Activated CD8-positive, alpha-beta T cell treated with anti-CD3 and anti-CD28 coated beads, Interleukin-2, amount 10 ng/mL, durations not matched to agents 7 days and 5 days (primary cell): ENCODE measurements at regions of chr18 and their contacts with region 1.

Region 1: DNA sequence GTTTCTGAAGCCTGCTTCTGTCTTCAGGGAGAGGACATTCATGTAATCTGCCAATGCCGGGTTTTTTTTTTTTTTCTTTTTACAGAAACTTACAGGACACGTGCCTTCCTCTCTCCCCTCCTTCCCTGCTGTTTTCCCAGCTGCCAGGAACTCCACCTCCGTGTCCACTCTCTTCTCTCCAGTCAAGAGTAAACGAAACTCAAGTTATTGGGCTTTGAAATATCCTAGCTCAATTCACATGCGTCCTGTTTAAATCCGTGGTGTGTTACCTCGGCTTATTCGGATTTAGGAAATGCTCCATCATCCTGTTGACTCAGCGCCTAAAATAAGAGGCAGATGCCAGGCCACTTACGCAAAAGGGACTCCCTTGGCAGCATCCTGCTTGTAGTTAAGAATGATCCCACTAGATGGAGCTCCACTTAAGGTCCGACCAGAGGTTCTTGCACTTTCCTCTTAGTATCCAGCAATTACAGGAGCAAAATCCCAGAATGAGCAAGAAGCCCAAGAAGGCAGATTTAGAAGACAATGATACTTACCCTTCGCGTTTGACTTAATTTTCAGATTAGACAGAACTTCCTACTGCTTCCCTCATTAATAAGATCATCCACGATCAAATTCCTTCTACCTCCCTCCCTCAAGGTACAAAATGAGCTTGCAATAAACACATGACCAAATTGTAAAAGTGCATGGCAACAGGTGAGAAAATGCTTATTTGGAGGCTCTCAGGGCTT is 97.2 kb upstream of the ZCCHC2 start:
- DNase-seq: peak; percentile 76
- ATAC-seq: peak; percentile 35
- H3K4me3 Mint-ChIP-seq: no peak overlapping the region
- H3K27ac Mint-ChIP-seq: no peak overlapping the region
- H3K4me1 Mint-ChIP-seq: peaks cover 32% of the 10 kb centered on the region
- H3K27me3 Mint-ChIP-seq: peaks cover 2% of the 10 kb centered on the region

Region 2: DNA sequence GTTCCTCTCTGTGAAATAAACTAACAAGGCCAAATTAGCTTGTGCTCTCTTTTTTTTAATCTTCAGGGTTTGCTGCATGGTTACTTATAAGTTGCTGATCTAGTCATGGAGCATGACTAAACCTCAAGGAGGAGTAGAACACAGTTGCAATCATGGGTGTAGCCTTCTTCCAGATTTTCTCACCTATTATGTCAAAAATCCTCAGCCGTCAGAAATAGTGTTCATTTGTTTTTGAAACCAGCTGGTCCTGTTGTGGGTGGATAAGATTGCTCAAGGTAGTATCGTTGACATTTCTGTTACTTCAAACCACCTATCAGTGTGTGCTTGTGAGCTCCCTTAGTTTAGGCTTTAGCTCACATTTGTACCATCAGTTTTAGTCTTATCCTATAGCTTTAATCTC is 227.4 kb before region 1 on chr18:
- CTCF ChIA-PET with region 1: no interaction called
- POLR2A ChIA-PET with region 1: no interaction called
- DNase-seq: no peak
- ATAC-seq: no peak
- H3K4me3 Mint-ChIP-seq: no peak overlapping the region
- H3K27ac Mint-ChIP-seq: no peak overlapping the region
- H3K4me1 Mint-ChIP-seq: peaks cover 10% of the 10 kb centered on the region
- H3K27me3 Mint-ChIP-seq: no peaks in the 10 kb centered on the region

Region 3: DNA sequence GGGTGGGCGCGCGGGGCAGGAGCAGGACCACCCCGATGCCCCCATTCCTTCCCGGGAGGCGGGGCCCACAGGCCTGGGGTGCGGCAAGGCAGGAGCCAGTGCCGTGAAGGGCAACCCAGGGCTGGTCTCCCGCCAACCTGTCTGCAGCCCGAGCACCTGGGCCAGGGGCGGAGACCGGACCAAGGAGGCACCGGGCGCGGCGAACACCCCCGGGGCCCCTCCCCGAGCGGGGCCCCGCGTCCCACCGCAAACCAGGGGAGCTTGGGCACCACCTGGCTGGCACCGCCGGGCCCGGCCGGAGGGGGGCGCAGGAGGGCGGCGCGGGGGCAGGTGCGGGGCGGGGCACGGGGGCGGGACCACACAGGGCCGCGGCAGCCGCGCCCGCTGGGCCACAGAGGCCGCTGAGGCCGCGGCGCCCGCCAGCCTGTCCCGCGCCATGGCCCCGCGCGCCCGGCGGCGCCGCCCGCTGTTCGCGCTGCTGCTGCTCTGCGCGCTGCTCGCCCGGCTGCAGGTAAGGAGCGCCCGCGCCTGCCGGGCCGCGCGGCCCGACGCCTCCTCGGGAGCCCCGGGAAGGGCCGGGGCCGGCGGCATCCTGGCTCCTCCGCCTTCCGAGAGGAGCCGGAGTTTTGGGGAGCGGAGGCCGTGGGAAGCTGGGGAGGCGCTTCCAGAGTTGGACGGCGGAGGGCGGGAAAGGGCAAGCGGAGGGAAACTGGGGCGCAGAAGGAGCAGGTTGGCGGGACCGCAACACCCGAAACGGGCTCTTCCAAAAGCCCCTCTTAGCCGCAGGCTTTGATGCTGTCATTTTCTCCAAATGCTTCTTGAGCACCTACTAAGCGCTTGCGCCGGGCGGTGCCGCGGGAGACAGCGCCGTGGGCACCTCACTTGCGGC is 100.5 kb before region 1 on chr18 and contains the start of gene TNFRSF11A:
- CTCF ChIA-PET with region 1: interaction called, 31 read pairs
- POLR2A ChIA-PET with region 1: interaction called, 3 read pairs
- DNase-seq: peak; percentile 68
- ATAC-seq: peak; percentile 83
- H3K4me3 Mint-ChIP-seq: peak within 1 kb of the TSS; percentile 75
- H3K27ac Mint-ChIP-seq: no peak within 1 kb of the TSS
- H3K4me1 Mint-ChIP-seq: peaks cover 45% of the 10 kb centered on the region
- H3K27me3 Mint-ChIP-seq: peaks cover 52% of the 10 kb centered on the region
- total RNA-seq, gene TNFRSF11A: 4.0 to 4.3 TPM

Region 4: DNA sequence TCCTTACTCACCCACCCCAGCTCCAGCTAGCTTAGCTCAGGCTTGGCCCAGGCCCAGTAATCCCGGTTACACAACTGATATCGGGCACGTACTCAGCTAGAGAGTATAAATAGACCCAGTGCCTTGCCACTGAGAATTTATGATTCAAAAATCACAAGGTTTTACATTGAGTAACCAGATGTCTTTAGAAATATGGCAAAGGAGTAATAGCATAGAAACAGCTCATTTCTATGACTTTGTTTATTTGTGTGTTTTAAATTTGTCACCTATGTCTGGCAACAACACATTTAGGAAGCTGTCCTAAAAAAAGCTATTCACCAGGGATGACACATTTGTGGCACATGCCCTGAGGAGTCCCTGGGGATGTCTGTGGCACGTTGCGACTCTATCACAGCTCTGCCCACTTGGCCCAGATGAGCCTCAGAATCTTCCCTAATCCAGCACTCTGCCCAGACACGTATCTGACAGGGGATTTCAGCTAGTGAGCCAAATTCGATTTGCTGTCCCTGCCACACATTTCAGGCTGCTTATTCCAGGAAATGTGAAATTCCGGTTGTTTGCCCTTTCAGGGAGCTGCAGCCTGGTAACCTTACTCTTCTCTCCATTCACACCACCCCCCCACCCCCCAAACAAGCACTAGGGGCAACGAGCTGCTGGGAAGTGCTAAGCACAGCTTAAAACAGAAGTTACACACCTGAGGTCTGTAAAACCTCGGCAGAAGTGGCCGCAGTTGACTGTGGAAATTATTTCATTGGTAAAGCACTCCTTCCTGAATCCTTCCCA is 11.8 kb after region 1 on chr18:
- CTCF ChIA-PET with region 1: interaction called, 17 read pairs
- POLR2A ChIA-PET with region 1: no interaction called
- DNase-seq: no peak
- ATAC-seq: no peak
- H3K4me3 Mint-ChIP-seq: no peak overlapping the region
- H3K27ac Mint-ChIP-seq: no peak overlapping the region
- H3K4me1 Mint-ChIP-seq: no peaks in the 10 kb centered on the region
- H3K27me3 Mint-ChIP-seq: peaks cover 10% of the 10 kb centered on the region

Region 5: GRCh38 chr18:62505669-62506494 is 80.3 kb after region 1 on chr18:
- CTCF ChIA-PET with region 1: interaction called, 20 read pairs
- POLR2A ChIA-PET with region 1: interaction called, 19 read pairs
- DNase-seq: peak; percentile 51
- ATAC-seq: peak; percentile 84
- H3K4me3 Mint-ChIP-seq: peak overlapping the region; percentile 75
- H3K27ac Mint-ChIP-seq: peak overlapping the region; percentile 100
- H3K4me1 Mint-ChIP-seq: peaks cover 33% of the 10 kb centered on the region
- H3K27me3 Mint-ChIP-seq: no peaks in the 10 kb centered on the region

Region 6: GRCh38 chr18:62551972-62552507 is 126.4 kb after region 1 on chr18:
- CTCF ChIA-PET with region 1: interaction called, 10 read pairs
- POLR2A ChIA-PET with region 1: no interaction called
- DNase-seq: no peak
- ATAC-seq: no peak
- H3K4me3 Mint-ChIP-seq: no peak overlapping the region
- H3K27ac Mint-ChIP-seq: no peak overlapping the region
- H3K4me1 Mint-ChIP-seq: peaks cover 9% of the 10 kb centered on the region
- H3K27me3 Mint-ChIP-seq: no peaks in the 10 kb centered on the region

Region 7: DNA sequence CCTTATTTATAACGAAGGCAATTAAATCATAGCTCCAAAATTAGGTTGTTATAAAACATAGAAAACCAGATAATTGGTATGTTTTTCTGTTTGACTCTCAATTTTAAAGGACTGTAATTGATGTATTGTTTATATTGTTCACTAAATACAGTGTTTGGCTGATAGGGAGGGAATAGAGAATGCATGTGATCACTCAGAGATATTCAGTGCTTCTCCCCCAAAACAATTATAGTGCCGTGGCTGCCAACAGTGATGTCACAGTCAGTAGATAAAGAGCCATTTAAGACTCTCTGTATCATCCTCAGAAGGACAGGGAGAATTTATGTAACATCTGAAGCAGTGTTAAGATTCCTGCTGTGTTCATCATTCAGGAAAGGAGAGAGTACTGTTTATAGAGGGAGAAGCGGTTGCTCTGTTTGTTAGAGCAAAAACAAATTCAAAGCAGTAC is 359.4 kb after region 1 on chr18:
- CTCF ChIA-PET with region 1: no interaction called
- POLR2A ChIA-PET with region 1: no interaction called
- DNase-seq: no peak
- ATAC-seq: peak; percentile 18
- H3K4me3 Mint-ChIP-seq: no peak overlapping the region
- H3K27ac Mint-ChIP-seq: no peak overlapping the region
- H3K4me1 Mint-ChIP-seq: peaks cover 38% of the 10 kb centered on the region
- H3K27me3 Mint-ChIP-seq: no peaks in the 10 kb centered on the region